ENCODE measurements at regions of chr4 and their contacts with region 1.

Region 1: DNA sequence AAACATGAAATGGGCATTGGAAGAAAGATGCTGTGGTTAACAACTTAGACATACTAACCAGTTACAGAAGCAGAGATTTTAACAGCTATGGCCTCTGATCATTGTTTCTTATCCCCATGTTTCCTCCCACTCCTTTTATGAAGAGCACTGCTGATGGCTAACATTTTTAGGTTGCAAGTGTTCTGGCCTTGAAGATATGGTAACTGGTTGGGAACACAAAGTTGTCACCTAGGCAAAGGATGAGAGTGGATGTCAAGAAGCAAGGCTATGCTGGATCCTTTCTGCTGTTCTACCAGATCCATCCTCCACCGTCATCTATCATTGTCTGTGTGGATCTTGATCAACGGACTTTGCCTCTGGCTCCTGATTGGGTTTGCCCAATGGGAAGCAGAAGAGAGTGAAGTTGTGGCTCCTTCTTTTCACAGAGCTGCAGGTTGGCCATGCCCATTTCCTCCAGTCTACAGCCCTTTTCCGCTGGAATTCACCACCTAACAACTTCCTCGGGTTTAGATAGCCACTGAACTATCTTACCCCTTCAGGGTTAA is 48.9 kb upstream of the SPP1 start:
- DNase-seq: no peak
- H3K4me3 ChIP-seq: no peak overlapping the region
- H3K27ac ChIP-seq: no peak overlapping the region
- H3K4me1 ChIP-seq: no peaks in the 10 kb centered on the region
- H3K27me3 ChIP-seq: peaks cover 3 to 4% of the 10 kb centered on the region in 2 experiments
- CTCF ChIP-seq: no peak
- POLR2A ChIP-seq: no peak

Region 2: GRCh38 chr4:87130985-87131703 is 795.5 kb before region 1 on chr4:
- CTCF ChIA-PET with region 1: no interaction called
- POLR2A ChIA-PET with region 1: no interaction called
- dilution Hi-C with region 1: no loop called
- intact Hi-C with region 1: no loop called
- DNase-seq: no peak
- H3K4me3 ChIP-seq: no peak overlapping the region
- H3K27ac ChIP-seq: no peak overlapping the region
- H3K4me1 ChIP-seq: no peaks in the 10 kb centered on the region
- H3K27me3 ChIP-seq: no peaks in the 10 kb centered on the region
- CTCF ChIP-seq: no peak
- POLR2A ChIP-seq: no peak

Region 3: GRCh38 chr4:87938746-87939145 is 12.1 kb after region 1 on chr4:
- CTCF ChIA-PET with region 1: interaction called, 6 read pairs
- POLR2A ChIA-PET with region 1: no interaction called
- dilution Hi-C with region 1: no loop called
- intact Hi-C with region 1: loop called (anchors 1 kb)
- DNase-seq: no peak
- H3K4me3 ChIP-seq: no peak overlapping the region
- H3K27ac ChIP-seq: no peak overlapping the region
- H3K4me1 ChIP-seq: no peaks in the 10 kb centered on the region
- H3K27me3 ChIP-seq: peaks cover 0 to 5% of the 10 kb centered on the region in 2 experiments
- CTCF ChIP-seq: no peak
- POLR2A ChIP-seq: no peak